ENCODE measurements at regions of chr5 and their contacts with region 1.

Region 1: DNA sequence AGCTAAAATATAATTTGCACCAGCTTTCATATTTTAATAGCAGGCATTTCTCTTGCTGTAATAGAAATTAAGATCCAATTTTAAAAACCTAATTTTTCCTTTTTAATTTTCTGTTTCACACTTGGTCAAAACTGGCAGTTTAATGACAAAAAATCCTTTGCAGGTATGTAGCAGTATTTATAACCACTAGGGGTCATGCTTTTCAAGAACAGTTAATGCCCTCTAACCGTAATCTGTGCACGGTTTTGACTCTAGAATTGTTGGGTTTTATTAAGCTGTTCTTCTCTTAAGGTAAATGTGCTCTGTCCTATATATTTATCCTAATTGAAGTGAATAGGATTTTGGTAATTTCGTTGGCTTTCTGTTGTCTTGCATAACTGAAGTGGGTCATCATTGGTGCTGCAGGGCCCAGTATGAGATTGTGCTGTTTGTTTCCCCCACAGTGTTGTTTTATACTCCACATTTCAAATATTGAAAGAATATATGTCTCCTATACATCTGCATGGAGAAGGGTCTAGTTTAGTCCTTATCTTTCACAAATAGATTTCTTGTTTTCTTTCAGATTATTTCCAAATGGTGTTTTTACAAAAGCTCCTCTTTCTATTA is 107.4 kb downstream of the SCAMP1 start:
- DNase-seq: peak; percentile 3
- ATAC-seq: peak; percentile 91
- H3K4me3 ChIP-seq: no peak overlapping the region
- H3K27ac ChIP-seq: no peak overlapping the region
- H3K4me1 ChIP-seq: no peaks in the 10 kb centered on the region
- H3K27me3 ChIP-seq: no peaks in the 10 kb centered on the region
- CTCF ChIP-seq: peak; percentile 55 to 76 (median 64)
- EP300 ChIP-seq: no peak
- POLR2A ChIP-seq: no peak
- RAD21 ChIP-seq: peak; percentile 76

Region 2: GRCh38 chr5:78359831-78360673 is 107.8 kb before region 1 on chr5 and contains the start of gene SCAMP1:
- CTCF ChIA-PET with region 1: interaction called, 3 read pairs
- POLR2A ChIA-PET with region 1: no interaction called
- RAD21 ChIA-PET with region 1: interaction called, 5 read pairs
- SMC1A ChIA-PET with region 1: interaction called, 3 read pairs
- in situ Hi-C with region 1: no loop called
- intact Hi-C with region 1: loop called (anchors 5 kb)
- DNase-seq: peak; percentile 83
- ATAC-seq: peak; percentile 94
- H3K4me3 ChIP-seq: peak within 1 kb of the TSS; percentile 94
- H3K27ac ChIP-seq: peak within 1 kb of the TSS; percentile 96
- H3K4me1 ChIP-seq: peaks cover 5% of the 10 kb centered on the region
- H3K27me3 ChIP-seq: no peaks in the 10 kb centered on the region
- CTCF ChIP-seq: peak; percentile 23 to 29 (median 28); a peak in 4 of 6 replicates
- EP300 ChIP-seq: peak; percentile 67 to 78
- POLR2A ChIP-seq: peak; percentile 94
- RAD21 ChIP-seq: no peak
- polyA plus RNA-seq, gene SCAMP1: 9.1 to 21.2 TPM

Region 3: GRCh38 chr5:78497573-78498533 is 30.0 kb after region 1 on chr5:
- CTCF ChIA-PET with region 1: interaction called, 10 read pairs
- POLR2A ChIA-PET with region 1: no interaction called
- RAD21 ChIA-PET with region 1: no interaction called
- SMC1A ChIA-PET with region 1: interaction called, 4 read pairs
- in situ Hi-C with region 1: no loop called
- intact Hi-C with region 1: no loop called
- DNase-seq: no peak
- ATAC-seq: peak; percentile 75
- H3K4me3 ChIP-seq: peak overlapping the region; percentile 9; the same call in 1 of the 2 replicates
- H3K27ac ChIP-seq: peak overlapping the region; percentile 73
- H3K4me1 ChIP-seq: peaks cover 27% of the 10 kb centered on the region
- H3K27me3 ChIP-seq: no peaks in the 10 kb centered on the region
- CTCF ChIP-seq: no peak
- EP300 ChIP-seq: peak in 1 of 2 experiments; percentile 39; a peak in 1 of 4 replicates
- POLR2A ChIP-seq: no peak
- RAD21 ChIP-seq: no peak

Region 4: DNA sequence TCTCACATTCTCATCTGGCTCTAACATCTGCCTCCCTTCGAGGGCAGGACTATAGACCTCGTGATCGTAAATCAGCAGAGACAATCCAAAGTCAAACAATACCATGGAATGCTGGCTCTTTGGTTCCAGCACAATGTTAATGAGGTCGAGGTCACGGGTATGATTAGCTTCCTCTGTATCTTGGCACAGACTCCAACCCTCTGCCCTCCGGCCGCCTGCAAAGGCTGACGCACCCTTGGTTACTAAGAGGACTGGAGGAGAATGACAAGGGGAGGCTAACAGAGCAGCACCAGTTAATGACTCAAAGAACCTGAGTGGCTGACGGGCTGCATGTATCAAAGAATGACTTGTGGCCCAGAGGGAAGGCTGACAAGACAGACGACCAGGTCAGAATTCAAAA is 170.6 kb after region 1 on chr5:
- CTCF ChIA-PET with region 1: interaction called, 4 read pairs
- POLR2A ChIA-PET with region 1: no interaction called
- RAD21 ChIA-PET with region 1: no interaction called
- SMC1A ChIA-PET with region 1: interaction called, 3 read pairs
- in situ Hi-C with region 1: no loop called
- intact Hi-C with region 1: loop called (anchors 5 kb)
- DNase-seq: no peak
- ATAC-seq: no peak
- H3K4me3 ChIP-seq: no peak overlapping the region
- H3K27ac ChIP-seq: no peak overlapping the region
- H3K4me1 ChIP-seq: peaks cover 24% of the 10 kb centered on the region
- H3K27me3 ChIP-seq: no peaks in the 10 kb centered on the region
- CTCF ChIP-seq: no peak
- EP300 ChIP-seq: no peak
- POLR2A ChIP-seq: no peak
- RAD21 ChIP-seq: no peak

Region 5: DNA sequence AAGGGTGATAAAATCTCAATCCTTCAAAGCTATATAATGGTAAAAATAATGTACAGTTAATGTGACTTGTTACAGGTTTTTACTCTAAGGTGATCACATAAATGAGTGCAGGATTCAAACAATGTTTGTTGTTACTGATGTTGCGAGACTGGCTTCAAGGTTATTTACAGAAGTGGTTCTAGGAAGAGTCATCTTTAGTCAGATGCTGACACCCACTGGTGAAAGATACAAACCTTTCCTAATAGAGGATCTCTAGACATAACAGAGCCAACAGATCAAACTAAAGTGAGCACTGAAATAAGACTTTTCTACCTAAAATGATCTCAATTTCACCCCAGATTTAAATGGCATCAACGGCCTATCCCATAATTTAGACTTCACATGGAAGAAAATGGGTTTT is 497.0 kb after region 1 on chr5:
- CTCF ChIA-PET with region 1: interaction called, 14 read pairs
- POLR2A ChIA-PET with region 1: no interaction called
- RAD21 ChIA-PET with region 1: interaction called, 15 read pairs
- SMC1A ChIA-PET with region 1: interaction called, 14 read pairs
- in situ Hi-C with region 1: no loop called
- intact Hi-C with region 1: loop called (anchors 2 kb)
- DNase-seq: no peak
- ATAC-seq: peak; percentile 88
- H3K4me3 ChIP-seq: no peak overlapping the region
- H3K27ac ChIP-seq: no peak overlapping the region
- H3K4me1 ChIP-seq: no peaks in the 10 kb centered on the region
- H3K27me3 ChIP-seq: no peaks in the 10 kb centered on the region
- CTCF ChIP-seq: peak; percentile 43 to 70 (median 45); a peak in 4 of 6 replicates
- EP300 ChIP-seq: no peak
- POLR2A ChIP-seq: no peak
- RAD21 ChIP-seq: peak; percentile 92